ENCODE measurements at regions of chr11 and their contacts with region 1.

Region 1: GRCh38 chr11:61332797-61333549 is at the starts of genes DDB1 and TKFC:
- DNase-seq: peak; percentile 98
- H3K4me3 Mint-ChIP-seq: peak within 1 kb of the TSS; percentile 99
- H3K27ac Mint-ChIP-seq: peak within 1 kb of the TSS; percentile 98
- H3K4me1 Mint-ChIP-seq: peaks cover 78% of the 10 kb centered on the region
- H3K27me3 Mint-ChIP-seq: no peaks in the 10 kb centered on the region
- total RNA-seq, gene DDB1: 166 to 174 TPM
- total RNA-seq, gene TKFC: 49.6 to 51.5 TPM

Region 2: DNA sequence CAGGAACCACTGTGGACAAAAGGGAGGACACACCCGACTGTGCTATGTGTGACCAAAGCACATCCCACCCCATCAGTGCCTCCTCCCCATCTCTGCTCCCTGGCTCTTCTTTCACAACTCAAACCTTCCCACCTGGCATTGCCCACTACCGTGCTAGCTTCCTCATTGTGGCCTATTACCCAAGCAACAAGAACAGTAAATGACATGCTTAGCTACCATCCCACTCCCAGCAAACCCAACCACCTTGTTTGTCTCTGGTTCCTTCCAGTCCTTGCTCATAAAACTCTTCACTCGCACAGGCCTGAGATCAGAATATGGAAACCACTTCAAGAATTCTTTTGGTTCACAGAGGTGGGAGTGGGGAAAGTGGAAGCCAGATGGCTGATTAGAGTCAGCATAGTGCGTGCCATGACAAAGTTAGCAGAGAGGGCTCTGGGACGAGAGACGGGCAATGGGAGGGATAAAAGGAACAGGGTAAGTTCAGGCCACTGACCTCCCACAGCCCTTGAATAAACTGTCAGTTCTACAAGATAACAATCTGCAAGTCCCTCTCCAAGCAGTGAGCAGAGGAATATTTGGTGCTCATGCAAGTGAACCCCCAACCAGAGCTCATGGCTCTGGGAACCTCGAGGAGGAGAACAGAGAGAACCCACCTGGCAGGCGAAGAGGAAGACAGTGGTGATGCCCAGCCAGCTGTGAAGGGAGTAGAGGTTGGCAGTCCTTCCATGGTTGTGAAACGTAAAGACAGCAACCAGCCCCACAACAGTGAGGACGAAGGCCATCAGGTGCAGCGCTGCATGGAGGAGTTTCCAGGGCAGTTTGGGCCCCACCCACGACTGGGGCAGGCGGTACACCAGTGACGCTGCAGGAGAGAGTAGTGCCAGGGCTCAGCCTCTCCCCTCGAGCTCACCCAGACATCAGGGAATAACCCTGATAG is 20.4 kb after region 1 on chr11:
- CTCF ChIA-PET with region 1: interaction called, 153 read pairs
- POLR2A ChIA-PET with region 1: interaction called, 7 read pairs
- DNase-seq: no peak
- H3K4me3 Mint-ChIP-seq: no peak overlapping the region
- H3K27ac Mint-ChIP-seq: no peak overlapping the region
- H3K4me1 Mint-ChIP-seq: peaks cover 4% of the 10 kb centered on the region
- H3K27me3 Mint-ChIP-seq: no peaks in the 10 kb centered on the region

Region 3: DNA sequence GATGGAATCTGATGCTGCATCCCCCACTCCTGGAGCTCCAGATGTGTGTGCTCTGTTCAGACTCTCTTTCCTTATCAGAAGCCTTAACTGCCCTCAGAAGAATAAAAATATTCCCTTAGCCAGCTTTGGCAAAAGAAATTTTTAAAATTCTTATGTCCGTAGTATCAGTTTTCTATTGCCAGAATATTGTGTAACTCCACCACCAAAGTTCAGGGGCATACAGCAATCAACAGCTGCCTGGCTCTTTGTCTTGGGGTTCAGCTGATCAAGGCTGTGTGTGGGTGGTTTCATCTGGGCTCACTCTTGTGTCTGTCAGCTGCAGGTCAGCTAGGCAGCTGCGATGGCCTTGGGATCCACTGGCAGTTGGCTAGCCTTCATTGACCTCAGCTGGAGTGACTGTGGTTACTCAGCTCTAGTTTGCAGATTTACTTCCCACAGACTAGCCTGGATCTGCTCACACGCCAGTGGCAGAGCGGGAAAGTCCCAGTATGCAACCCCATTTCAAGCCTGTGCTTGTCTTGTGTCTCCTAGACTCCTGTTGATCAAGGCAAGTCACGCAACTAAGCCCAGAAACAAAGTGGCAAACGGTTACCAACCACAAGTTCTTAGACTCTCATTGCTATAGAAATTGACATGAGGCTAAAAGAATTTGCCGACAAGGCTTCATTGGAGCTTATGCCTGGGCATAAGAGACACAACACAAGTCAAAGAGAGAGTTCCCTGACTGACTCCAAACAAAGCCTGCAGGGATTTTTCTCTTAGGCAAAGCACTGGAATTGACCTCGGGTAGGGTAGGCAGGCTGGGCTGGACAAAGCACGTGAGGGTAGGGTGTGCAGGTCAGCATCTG is 36.6 kb after region 1 on chr11:
- CTCF ChIA-PET with region 1: interaction called, 153 read pairs
- POLR2A ChIA-PET with region 1: interaction called, 8 read pairs
- DNase-seq: no peak
- H3K4me3 Mint-ChIP-seq: no peak overlapping the region
- H3K27ac Mint-ChIP-seq: no peak overlapping the region
- H3K4me1 Mint-ChIP-seq: peaks cover 10% of the 10 kb centered on the region
- H3K27me3 Mint-ChIP-seq: no peaks in the 10 kb centered on the region

Region 4: DNA sequence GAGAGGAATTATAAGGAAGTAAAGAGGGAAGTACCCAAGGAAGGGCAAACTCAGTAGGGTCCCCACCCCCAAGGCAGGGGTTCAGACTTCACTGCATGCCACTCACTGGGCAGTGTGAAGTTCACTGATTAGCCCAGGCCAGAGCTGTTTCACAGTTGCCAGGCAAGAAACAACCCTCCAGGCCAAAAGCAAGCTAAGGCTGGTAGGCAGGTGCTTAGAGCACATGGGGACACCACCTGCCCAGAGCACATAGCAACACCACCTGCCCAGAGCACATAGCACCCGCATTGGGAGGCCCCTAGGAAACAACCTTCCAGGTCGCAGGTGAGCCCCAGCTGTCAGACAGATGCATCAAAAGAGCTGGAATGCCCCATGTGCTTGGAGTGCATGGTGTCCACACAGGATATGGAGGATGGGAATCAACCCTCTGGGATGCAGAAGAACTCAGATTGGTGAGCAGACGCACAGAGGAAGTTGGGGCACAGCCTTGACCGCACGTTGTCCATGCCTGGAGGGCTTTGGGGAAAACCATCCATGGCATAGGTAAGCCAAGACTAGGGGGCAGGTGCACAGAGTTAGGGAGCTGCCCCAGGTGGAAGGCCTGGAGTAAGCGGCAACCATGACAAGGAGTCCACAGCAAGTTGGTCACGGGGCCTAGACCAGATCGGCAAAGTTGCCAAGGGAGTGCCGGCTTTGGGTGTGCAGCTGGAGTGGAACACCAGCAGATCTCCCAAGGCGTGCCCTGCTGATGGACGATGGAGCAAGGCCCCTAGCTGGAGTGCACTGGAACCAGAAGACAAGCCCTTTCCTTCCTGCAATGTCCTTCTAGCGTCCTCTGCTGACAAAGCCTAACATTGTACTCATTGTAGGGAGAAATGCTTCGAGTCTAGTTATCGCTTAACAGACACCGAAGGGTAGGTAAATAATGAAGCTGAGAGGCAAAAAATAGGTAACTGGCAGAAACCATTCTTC is 51.6 kb after region 1 on chr11:
- CTCF ChIA-PET with region 1: interaction called, 289 read pairs
- POLR2A ChIA-PET with region 1: interaction called, 48 read pairs
- DNase-seq: no peak
- H3K4me3 Mint-ChIP-seq: no peak overlapping the region
- H3K27ac Mint-ChIP-seq: no peak overlapping the region
- H3K4me1 Mint-ChIP-seq: peaks cover 8% of the 10 kb centered on the region
- H3K27me3 Mint-ChIP-seq: no peaks in the 10 kb centered on the region

Region 5: DNA sequence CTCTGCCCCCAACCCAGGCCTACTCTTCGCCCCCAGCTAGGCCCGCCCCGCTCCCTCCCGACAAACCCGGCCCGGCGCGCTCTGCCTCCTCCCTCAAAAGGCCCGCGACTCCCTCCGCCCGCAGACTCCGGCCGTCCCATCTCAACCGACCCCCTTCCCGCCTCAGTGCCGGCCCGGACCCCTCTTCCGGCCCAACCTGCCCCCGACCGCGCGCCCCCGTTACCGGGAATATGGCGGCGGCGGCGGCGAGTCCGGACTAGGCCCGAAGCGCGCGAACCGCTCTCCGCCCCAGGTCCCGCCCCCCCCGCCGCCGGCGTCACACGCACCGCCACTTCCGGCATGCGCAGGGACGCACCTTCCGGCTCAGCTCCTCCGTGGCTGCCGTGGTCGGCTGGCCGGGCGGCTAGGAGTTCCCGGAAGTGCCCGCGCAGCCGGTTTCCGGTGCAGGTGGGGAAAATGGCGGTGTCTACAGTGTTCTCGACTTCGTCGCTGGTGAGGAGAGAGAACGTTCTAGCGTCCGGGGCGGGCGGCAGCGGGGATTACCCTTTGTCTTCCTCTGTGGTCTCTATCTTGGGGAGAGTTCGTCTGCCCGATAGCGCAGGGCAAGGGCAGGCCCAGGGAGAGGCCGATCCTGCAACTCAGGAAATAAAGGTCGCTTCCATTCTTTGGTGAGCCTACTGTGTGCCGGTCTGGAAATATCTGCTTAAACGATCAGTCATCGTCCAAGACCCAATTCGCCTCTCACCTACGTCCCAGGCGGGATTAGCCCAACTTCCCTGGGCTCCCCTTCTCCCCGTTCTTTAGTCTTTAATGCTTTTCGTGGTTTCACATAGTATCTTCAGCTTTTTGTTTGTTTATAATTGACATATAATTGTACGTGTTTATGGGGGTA is 97.0 kb after region 1 on chr11 and contains the starts of genes CPSF7 and SDHAF2:
- CTCF ChIA-PET with region 1: interaction called, 23 read pairs
- POLR2A ChIA-PET with region 1: interaction called, 49 read pairs
- DNase-seq: peak; percentile 98
- H3K4me3 Mint-ChIP-seq: peak within 1 kb of the TSS; percentile 99
- H3K27ac Mint-ChIP-seq: peak within 1 kb of the TSS; percentile 99
- H3K4me1 Mint-ChIP-seq: peaks cover 65% of the 10 kb centered on the region
- H3K27me3 Mint-ChIP-seq: no peaks in the 10 kb centered on the region
- total RNA-seq, gene CPSF7: 89.6 to 90.2 TPM
- total RNA-seq, gene SDHAF2: 47.3 to 47.5 TPM